HepG2 (cell line): ENCODE measurements at regions of chr1 and their contacts with region 1.

Region 1: DNA sequence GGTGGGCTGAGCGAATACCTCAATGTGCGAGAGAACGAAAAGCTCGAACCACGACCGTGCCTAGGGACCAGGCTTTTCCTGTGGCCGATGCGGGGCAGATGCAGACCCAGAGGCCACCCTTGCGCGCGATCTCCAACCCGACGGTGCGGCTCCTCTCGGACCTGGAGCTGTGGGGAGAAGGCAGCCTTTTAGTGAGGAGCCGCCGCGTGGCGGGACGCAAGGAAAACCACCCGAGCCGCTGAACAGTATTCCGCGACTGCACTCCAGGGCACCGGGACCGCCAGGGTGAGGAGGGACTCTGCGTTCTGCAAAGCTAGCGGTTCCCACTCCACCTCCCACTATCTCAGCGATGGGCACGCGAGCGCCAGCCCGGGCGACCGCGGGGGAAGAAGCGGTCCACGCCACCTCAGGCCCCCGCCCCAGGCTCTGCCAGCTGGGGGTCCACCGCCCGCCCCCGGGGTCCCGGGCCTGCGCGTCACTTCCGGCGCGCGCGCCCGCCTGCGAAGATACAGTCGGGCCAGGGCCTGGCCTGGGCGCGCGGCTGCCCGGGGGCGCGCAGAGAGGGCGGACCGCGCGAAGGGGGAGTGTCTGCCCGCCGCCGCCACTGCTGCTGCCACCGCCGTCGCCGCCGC is 66.5 kb upstream of the PRKACB start:
- DNase-seq: peak; percentile 47
- ATAC-seq: peak; percentile 94
- H3K4me3 ChIP-seq: peak overlapping the region; percentile 89 to 99 (median 92)
- H3K27ac ChIP-seq: peak overlapping the region; percentile 90
- H3K4me1 ChIP-seq: peaks cover 26% of the 10 kb centered on the region
- H3K27me3 ChIP-seq: no peaks in the 10 kb centered on the region
- CTCF ChIP-seq: no peak
- EP300 ChIP-seq: no peak
- POLR2A ChIP-seq: peak; percentile 80 to 88
- RAD21 ChIP-seq: no peak

Region 2: DNA sequence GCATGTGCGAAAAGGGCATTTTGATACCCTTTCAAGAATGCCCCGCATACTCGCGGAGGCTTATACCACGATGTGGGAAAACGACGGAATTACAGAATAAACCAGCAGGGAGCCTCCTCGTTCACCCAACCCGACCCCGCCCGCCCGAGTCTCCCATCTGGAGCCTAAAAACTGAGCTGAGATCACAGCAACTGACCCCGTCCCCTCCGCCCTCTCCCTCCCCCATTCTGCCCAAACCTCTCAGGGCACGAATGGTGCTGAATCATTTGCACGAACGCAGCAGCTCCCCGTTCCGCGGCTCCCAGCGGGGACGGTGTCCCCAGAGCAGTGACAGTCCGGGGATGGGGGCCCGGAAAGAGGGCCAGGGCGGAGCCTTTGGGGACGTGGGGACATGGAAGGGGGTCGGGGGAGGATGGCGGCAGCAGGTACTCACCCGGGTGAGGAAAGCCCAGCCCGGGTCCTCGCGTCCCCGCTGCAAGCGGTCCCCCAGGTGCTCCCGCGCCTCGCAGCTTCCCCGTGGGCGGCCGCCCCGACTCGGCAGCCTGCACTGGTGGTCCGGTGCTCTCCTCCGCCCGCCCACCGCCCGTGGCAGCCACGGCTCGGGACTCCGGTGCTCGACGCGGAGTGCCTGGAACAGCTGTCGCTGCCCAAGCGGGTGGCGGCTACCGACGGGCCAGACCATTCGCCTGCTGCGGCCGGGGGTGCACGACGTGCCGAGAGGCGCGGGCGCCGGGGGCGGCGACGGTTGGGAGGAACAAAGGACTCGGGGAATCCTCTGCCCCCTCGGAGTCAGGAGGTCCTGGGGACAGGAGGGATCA is 78.9 kb before region 1 on chr1 and contains the start of gene TTLL7:
- CTCF ChIA-PET with region 1: no interaction called
- POLR2A ChIA-PET with region 1: no interaction called
- in situ Hi-C with region 1: no loop called
- intact Hi-C with region 1: loop called (anchors 2 kb)
- DNase-seq: peak; percentile 10
- ATAC-seq: peak; percentile 93
- H3K4me3 ChIP-seq: peak within 1 kb of the TSS; percentile 60 to 76 (median 75); a peak in 5 of 6 replicates
- H3K27ac ChIP-seq: no peak within 1 kb of the TSS
- H3K4me1 ChIP-seq: peaks cover 6% of the 10 kb centered on the region
- H3K27me3 ChIP-seq: peaks cover 1 to 23% of the 10 kb centered on the region in 2 experiments; a peak in 4 of 5 replicates
- CTCF ChIP-seq: no peak
- EP300 ChIP-seq: no peak
- POLR2A ChIP-seq: no peak
- RAD21 ChIP-seq: no peak
- total RNA-seq, gene TTLL7: 0.22 and 0.38 TPM in 2 replicates

Region 3: DNA sequence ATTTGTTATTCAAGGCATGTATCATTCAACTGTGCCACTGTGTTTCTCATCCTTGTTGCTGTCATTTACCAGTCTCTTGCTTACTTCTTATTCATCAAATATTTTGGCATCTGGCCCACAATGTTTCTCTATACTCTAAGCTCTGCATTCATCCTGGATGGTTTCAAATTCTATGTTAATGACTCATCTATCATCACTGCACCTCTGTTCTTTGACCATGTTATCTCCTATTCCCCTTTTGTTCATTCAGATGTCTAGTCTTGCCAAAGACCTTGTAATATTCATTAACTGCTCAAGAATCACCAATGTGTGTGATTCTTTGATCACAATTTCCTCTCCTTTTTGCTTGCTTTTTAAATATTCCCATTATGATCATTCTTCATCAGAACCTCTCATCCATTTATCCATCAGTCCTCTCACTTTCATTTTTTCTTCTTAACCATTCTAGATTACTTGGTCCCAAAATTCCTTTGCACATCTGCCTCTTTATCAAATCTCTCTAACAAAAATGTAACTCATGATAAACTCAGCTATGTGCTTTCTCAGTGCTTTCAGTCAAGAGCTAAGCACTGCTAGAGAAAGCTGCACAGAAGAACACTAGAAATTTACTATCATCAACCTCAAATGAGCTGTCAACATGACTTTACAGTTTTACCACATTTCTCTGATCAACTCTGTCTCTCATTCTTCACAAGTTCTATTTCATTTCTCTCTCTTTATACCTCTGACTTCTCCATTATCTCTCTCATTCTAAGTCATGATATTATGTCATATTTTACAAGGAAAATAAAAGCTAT is 12.1 kb after region 1 on chr1:
- CTCF ChIA-PET with region 1: no interaction called
- POLR2A ChIA-PET with region 1: no interaction called
- in situ Hi-C with region 1: no loop called
- intact Hi-C with region 1: loop called (anchors 1 kb)
- DNase-seq: peak; percentile 62
- ATAC-seq: no peak; the same call in 2 of the 3 replicates
- H3K4me3 ChIP-seq: no peak overlapping the region
- H3K27ac ChIP-seq: no peak overlapping the region
- H3K4me1 ChIP-seq: peaks cover 14% of the 10 kb centered on the region; the same call in 1 of the 2 replicates
- H3K27me3 ChIP-seq: no peaks in the 10 kb centered on the region
- CTCF ChIP-seq: no peak
- EP300 ChIP-seq: no peak
- POLR2A ChIP-seq: no peak
- RAD21 ChIP-seq: no peak

Region 4: GRCh38 chr1:84103197-84103992 is 25.8 kb after region 1 on chr1:
- CTCF ChIA-PET with region 1: no interaction called
- POLR2A ChIA-PET with region 1: no interaction called
- in situ Hi-C with region 1: no loop called
- intact Hi-C with region 1: loop called (anchors 1 kb)
- DNase-seq: peak; percentile 37
- ATAC-seq: peak; percentile 82
- H3K4me3 ChIP-seq: no peak overlapping the region
- H3K27ac ChIP-seq: no peak overlapping the region
- H3K4me1 ChIP-seq: peaks cover 12% of the 10 kb centered on the region
- H3K27me3 ChIP-seq: no peaks in the 10 kb centered on the region
- CTCF ChIP-seq: no peak
- EP300 ChIP-seq: no peak
- POLR2A ChIP-seq: no peak
- RAD21 ChIP-seq: no peak

Region 5: DNA sequence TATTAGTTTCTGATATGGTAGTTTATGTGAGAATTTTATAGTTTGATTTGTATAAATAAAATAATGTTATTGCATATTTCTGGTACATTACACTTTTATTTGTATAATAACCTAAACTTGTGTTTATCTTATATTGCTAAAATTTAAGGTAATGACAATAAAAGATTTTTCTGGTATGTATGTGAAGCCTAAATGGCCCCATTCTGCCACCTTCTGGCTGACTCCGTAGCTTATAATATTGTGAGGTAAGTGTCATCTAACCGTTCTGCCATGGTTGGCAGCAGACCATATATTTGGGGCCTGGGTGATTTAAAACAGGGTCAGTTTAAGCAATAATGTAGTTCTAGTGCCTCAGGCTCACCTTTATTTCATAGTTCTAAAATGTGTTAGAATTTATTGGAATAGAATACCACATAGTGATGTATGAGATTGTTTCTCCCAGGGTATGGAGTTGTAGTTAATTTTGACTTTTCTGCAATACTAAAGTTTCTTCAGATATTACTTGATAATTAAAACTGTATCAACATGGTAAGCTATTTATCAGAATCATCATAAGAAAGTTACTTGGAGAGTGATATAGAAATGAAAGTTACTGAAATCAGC is 45.3 kb after region 1 on chr1:
- CTCF ChIA-PET with region 1: no interaction called
- POLR2A ChIA-PET with region 1: no interaction called
- in situ Hi-C with region 1: no loop called
- intact Hi-C with region 1: loop called (anchors 5 kb)
- DNase-seq: peak; percentile 38
- ATAC-seq: peak; percentile 81
- H3K4me3 ChIP-seq: no peak overlapping the region
- H3K27ac ChIP-seq: no peak overlapping the region
- H3K4me1 ChIP-seq: no peaks in the 10 kb centered on the region
- H3K27me3 ChIP-seq: no peaks in the 10 kb centered on the region
- CTCF ChIP-seq: peak; percentile 61
- EP300 ChIP-seq: no peak
- POLR2A ChIP-seq: no peak
- RAD21 ChIP-seq: no peak

Region 6: DNA sequence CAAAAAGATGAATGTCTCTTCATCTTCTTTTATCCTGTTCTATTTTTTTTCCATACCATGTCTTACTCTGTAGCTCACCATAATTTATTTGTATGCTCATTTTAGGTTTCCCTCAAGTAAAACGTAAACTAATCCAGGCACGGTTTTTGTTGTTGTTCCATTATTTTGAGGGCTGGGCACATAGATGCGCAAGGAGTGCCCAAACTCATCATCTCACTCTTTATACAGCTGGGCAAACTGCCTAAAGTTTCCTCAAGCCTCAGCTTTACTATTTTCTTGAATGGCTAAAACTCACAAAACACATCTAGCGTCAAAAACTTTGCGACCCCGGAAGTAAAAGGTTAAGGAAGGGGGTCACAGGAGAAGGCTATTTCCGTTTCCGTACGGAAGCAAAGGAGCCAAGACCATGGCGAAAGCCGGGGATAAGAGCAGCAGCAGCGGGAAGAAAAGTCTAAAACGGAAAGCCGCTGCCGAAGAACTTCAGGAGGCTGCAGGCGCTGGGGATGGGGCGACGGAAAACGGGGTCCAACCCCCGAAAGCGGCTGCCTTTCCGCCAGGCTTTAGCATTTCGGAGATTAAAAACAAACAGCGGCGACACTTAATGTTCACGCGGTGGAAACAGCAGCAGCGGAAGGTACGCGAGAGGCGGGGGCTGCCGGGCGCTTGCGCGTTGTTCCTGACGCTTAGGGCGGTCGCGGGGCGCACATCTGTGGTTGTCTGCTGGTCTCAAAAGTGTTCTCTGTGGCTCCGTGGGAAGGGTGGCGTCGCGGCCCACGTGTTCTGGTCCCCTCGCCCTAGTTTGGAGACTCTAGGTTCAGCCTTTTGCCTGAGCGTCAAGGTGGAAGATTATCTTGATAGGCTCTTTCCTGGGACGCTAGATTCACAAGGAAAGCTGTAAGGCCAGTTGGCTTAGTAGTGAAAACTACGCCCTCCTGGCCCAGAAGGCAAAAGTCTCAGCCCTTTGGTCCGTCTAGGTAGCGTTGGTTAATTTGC is 401.6 kb after region 1 on chr1 and contains the start of gene RPF1:
- CTCF ChIA-PET with region 1: no interaction called
- POLR2A ChIA-PET with region 1: no interaction called
- in situ Hi-C with region 1: no loop called
- intact Hi-C with region 1: loop called (anchors 10 kb)
- DNase-seq: peak; percentile 82
- ATAC-seq: peak; percentile 99
- H3K4me3 ChIP-seq: peak within 1 kb of the TSS; percentile 82 to 94 (median 93)
- H3K27ac ChIP-seq: peak within 1 kb of the TSS; percentile 86
- H3K4me1 ChIP-seq: peaks cover 20% of the 10 kb centered on the region
- H3K27me3 ChIP-seq: no peaks in the 10 kb centered on the region; a peak in 1 of 5 replicates
- CTCF ChIP-seq: no peak
- EP300 ChIP-seq: peak in 1 of 2 experiments; percentile 8; a peak in 1 of 4 replicates
- POLR2A ChIP-seq: peak; percentile 58 to 84
- RAD21 ChIP-seq: peak; percentile 42; the same call in 1 of the 2 replicates
- total RNA-seq, gene RPF1: 39.0 and 58.4 TPM in 2 replicates

Region 7: GRCh38 chr1:84573967-84574842 is 496.6 kb after region 1 on chr1 and contains the start of gene CTBS:
- CTCF ChIA-PET with region 1: no interaction called
- POLR2A ChIA-PET with region 1: interaction called, 4 read pairs
- in situ Hi-C with region 1: no loop called
- intact Hi-C with region 1: loop called (anchors 5 kb)
- DNase-seq: peak; percentile 71
- ATAC-seq: peak; percentile 98
- H3K4me3 ChIP-seq: peak within 1 kb of the TSS; percentile 72 to 80 (median 78)
- H3K27ac ChIP-seq: peak within 1 kb of the TSS; percentile 94
- H3K4me1 ChIP-seq: peaks cover 21% of the 10 kb centered on the region
- H3K27me3 ChIP-seq: no peaks in the 10 kb centered on the region; a peak in 1 of 5 replicates
- CTCF ChIP-seq: peak; percentile 22; the same call in 1 of the 2 replicates
- EP300 ChIP-seq: no peak
- POLR2A ChIP-seq: peak; percentile 78 to 91
- RAD21 ChIP-seq: no peak
- total RNA-seq, gene CTBS: 4.2 and 4.7 TPM in 2 replicates